Colonic mucosa (tissue), 4 donors: ENCODE measurements at regions of chr2 and their contacts with region 1.

Region 1: GRCh38 chr2:68909793-68910674 is 38.8 kb upstream of the BMP10 start:
- DNase-seq: peak; percentile 84
- H3K4me3 ChIP-seq: no peak overlapping the region
- H3K27ac ChIP-seq: no peak overlapping the region
- H3K4me1 ChIP-seq: peaks cover 3% of the 10 kb centered on the region
- H3K27me3 ChIP-seq: no peaks in the 10 kb centered on the region
- CTCF ChIP-seq: peak; percentile 97

Region 2: GRCh38 chr2:68287580-68288441 is 622.2 kb before region 1 on chr2:
- intact Hi-C with region 1: no loop called
- DNase-seq: peak; percentile 20
- H3K4me3 ChIP-seq: no peak overlapping the region
- H3K27ac ChIP-seq: no peak overlapping the region
- H3K4me1 ChIP-seq: no peaks in the 10 kb centered on the region
- H3K27me3 ChIP-seq: no peaks in the 10 kb centered on the region
- CTCF ChIP-seq: no peak

Region 3: GRCh38 chr2:68467077-68467960 is 442.7 kb before region 1 on chr2 and contains the starts of genes APLF and FBXO48:
- intact Hi-C with region 1: loop called (anchors 10 kb)
- DNase-seq: peak; percentile 99
- H3K4me3 ChIP-seq: peak within 1 kb of the TSS; percentile 80
- H3K27ac ChIP-seq: peak within 1 kb of the TSS; percentile 82
- H3K4me1 ChIP-seq: peaks cover 5% of the 10 kb centered on the region
- H3K27me3 ChIP-seq: no peaks in the 10 kb centered on the region
- CTCF ChIP-seq: no peak
- total RNA-seq, gene APLF: 0.96 to 2.6 TPM
- total RNA-seq, gene FBXO48: 1.5 to 2.3 TPM

Region 4: GRCh38 chr2:68689553-68690537 is 220.2 kb before region 1 on chr2:
- intact Hi-C with region 1: no loop called
- DNase-seq: no peak
- H3K4me3 ChIP-seq: no peak overlapping the region
- H3K27ac ChIP-seq: no peak overlapping the region
- H3K4me1 ChIP-seq: no peaks in the 10 kb centered on the region
- H3K27me3 ChIP-seq: no peaks in the 10 kb centered on the region
- CTCF ChIP-seq: no peak

Region 5: DNA sequence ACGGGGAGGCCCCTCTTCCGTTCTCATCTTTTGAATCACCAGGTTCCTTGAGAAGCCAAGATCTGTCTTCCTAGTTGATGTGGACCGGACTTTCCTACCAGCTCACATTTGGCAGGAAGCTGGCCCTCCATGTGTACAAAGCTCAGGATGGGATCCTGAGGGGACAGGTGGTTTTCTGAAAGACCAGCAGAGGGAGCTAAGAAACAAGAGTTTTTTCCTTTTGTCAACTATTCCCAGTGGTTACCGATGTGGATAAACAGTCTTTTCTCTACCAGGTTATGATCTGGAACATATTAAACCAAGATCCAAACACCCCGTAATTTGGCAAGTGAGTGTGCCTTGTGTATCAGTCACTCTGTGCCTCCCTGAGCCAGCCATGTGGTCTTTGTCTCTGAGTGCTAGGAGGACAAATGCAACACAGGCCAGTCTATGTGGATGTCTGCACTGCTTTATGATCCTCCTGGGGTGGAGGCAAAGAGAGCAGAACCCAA is 200.6 kb before region 1 on chr2:
- intact Hi-C with region 1: loop called (anchors 5 kb)
- DNase-seq: no peak
- H3K4me3 ChIP-seq: no peak overlapping the region
- H3K27ac ChIP-seq: no peak overlapping the region
- H3K4me1 ChIP-seq: no peaks in the 10 kb centered on the region
- H3K27me3 ChIP-seq: no peaks in the 10 kb centered on the region
- CTCF ChIP-seq: peak; percentile 69

Region 6: GRCh38 chr2:68751397-68752339 is 158.4 kb before region 1 on chr2:
- intact Hi-C with region 1: loop called (anchors 2 kb)
- DNase-seq: peak; percentile 96
- H3K4me3 ChIP-seq: no peak overlapping the region
- H3K27ac ChIP-seq: no peak overlapping the region
- H3K4me1 ChIP-seq: no peaks in the 10 kb centered on the region
- H3K27me3 ChIP-seq: no peaks in the 10 kb centered on the region
- CTCF ChIP-seq: peak; percentile 98

Region 7: DNA sequence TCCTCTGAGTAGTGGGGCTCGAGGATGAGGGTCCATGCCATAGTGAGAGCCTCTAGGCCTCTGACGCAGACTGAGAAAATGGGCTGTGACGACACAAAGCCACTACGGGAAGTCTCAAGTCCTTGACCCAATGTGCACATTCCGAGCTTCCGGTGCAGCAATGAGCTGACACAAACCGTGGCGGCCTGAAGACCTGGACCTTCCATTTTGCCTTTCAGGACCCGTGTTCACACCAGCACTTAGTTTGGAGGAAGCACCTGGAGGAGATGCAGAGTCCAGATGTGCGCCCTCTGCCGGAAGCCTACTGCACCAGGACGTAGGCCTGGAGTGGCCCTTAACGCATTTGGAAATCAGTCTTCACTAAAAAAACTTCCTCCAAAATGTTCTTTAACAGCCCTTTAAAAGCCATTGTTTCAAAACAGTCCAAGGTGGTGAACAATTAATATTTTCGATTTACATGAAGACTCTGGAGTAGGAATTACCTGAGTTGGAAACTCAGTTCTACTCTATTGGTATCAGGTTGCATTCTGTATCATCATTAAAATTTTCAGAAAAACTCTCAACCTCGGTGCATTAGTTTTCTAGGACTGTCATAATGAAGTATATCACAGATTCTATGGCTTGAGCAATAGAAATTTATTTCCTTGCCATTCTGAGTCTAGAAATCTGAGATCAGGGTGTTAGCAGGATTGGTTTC is 72.7 kb before region 1 on chr2:
- intact Hi-C with region 1: loop called (anchors 5 kb)
- DNase-seq: peak; percentile 68
- H3K4me3 ChIP-seq: no peak overlapping the region
- H3K27ac ChIP-seq: no peak overlapping the region
- H3K4me1 ChIP-seq: no peaks in the 10 kb centered on the region
- H3K27me3 ChIP-seq: no peaks in the 10 kb centered on the region
- CTCF ChIP-seq: peak; percentile 61

Region 8: DNA sequence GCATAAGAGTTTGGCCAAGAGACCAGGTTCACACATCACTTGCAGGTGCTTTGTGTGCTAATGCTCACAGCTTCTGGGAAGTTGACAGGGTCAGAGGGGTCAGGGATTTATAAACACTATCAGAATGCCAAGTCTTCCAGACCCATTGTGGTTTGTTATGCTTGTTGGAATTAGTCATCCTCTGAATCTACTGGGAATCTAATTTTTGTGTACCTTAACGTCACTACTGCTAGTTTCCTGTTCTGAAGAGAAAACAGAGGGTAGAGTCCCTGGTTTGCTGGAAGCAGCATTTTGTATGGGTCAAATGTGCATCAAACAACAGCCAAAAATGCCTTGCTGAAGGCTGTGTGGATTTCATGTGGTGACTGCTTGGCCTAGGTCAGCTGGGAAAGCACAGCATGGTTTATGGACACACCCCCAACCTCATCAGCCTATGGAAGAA is 136.2 kb after region 1 on chr2:
- intact Hi-C with region 1: no loop called
- DNase-seq: no peak
- H3K4me3 ChIP-seq: no peak overlapping the region
- H3K27ac ChIP-seq: no peak overlapping the region
- H3K4me1 ChIP-seq: no peaks in the 10 kb centered on the region
- H3K27me3 ChIP-seq: no peaks in the 10 kb centered on the region
- CTCF ChIP-seq: no peak